ENCODE measurements at regions of chr7 and their contacts with region 1.

Region 1: GRCh38 chr7:119175911-119176627 is 951.6 kb downstream of the ANKRD7 start:
- DNase-seq: peak; percentile 31 to 85
- H3K4me3 ChIP-seq: no peak overlapping the region
- H3K27ac ChIP-seq: no peak overlapping the region
- H3K4me1 ChIP-seq: no peaks in the 10 kb centered on the region
- H3K27me3 ChIP-seq: no peaks in the 10 kb centered on the region
- CTCF ChIP-seq: peak in 4 of 7 experiments; percentile 30 to 51 (median 42)
- EP300 ChIP-seq: no peak
- POLR2A ChIP-seq: no peak

Region 2: GRCh38 chr7:118918556-118918955 is 257.5 kb before region 1 on chr7:
- intact Hi-C with region 1: loop called (anchors 10 kb)
- DNase-seq: peak in 1 of 2 donors; percentile 36
- H3K4me3 ChIP-seq: no peak overlapping the region
- H3K27ac ChIP-seq: no peak overlapping the region
- H3K4me1 ChIP-seq: no peaks in the 10 kb centered on the region
- H3K27me3 ChIP-seq: no peaks in the 10 kb centered on the region
- CTCF ChIP-seq: no peak
- EP300 ChIP-seq: no peak
- POLR2A ChIP-seq: no peak

Region 3: GRCh38 chr7:119482209-119482608 is 306.1 kb after region 1 on chr7:
- intact Hi-C with region 1: no loop called
- DNase-seq: peak; percentile 34 to 44
- H3K4me3 ChIP-seq: no peak overlapping the region
- H3K27ac ChIP-seq: no peak overlapping the region
- H3K4me1 ChIP-seq: no peaks in the 10 kb centered on the region
- H3K27me3 ChIP-seq: no peaks in the 10 kb centered on the region
- CTCF ChIP-seq: peak in 3 of 7 experiments; percentile 17 to 30 (median 17)
- EP300 ChIP-seq: no peak
- POLR2A ChIP-seq: no peak